Psoas muscle (tissue), 8 donors: ENCODE measurements at regions of chr12 and their contacts with region 1.

Region 1: DNA sequence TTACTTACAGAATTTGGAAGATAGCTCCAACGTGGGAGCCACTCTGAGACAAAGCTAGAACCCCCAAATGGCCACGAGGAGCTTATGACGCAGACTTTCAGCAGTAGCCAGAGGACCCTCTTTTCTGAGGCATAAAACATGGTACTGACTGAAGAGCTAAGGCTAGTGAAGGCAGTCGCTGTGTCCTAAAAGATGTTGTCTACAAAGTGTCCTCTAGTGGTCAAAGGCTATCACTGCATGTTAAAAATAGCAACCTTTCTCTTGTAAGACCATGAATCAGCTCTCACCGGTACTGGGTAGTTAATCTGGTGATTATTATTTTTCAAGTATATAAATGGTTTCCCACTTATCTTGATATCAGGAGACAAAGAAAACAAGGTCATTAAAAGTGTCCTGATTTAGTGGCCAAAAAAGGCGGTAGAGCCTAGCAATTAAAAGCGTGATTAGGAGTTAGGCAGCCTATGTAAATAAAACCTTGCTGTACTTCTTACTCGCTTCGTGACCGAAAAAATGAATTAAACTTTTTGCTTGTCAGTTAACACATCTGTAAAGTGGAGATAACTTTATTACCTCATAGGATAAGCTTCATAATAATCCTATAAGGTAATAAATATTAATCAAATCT is 47.0 kb upstream of the LGR5 start:
- DNase-seq: no peak
- ATAC-seq: peak; percentile 79 to 99 (median 90)
- H3K4me3 ChIP-seq: no peak overlapping the region
- H3K27ac ChIP-seq: no peak overlapping the region
- H3K4me1 ChIP-seq: no peaks in the 10 kb centered on the region
- H3K27me3 ChIP-seq: no peaks in the 10 kb centered on the region
- CTCF ChIP-seq: peak; percentile 76

Region 2: GRCh38 chr12:70733385-70733784 is 659.2 kb before region 1 on chr12:
- intact Hi-C with region 1: loop called in 1 of 2 experiments (anchors 10 kb)
- DNase-seq: no peak
- ATAC-seq: peak in 2 of 4 donors; percentile 72 to 85
- H3K4me3 ChIP-seq: no peak overlapping the region
- H3K27ac ChIP-seq: no peak overlapping the region
- H3K4me1 ChIP-seq: no peaks in the 10 kb centered on the region
- H3K27me3 ChIP-seq: no peaks in the 10 kb centered on the region
- CTCF ChIP-seq: peak; percentile 64

Region 3: DNA sequence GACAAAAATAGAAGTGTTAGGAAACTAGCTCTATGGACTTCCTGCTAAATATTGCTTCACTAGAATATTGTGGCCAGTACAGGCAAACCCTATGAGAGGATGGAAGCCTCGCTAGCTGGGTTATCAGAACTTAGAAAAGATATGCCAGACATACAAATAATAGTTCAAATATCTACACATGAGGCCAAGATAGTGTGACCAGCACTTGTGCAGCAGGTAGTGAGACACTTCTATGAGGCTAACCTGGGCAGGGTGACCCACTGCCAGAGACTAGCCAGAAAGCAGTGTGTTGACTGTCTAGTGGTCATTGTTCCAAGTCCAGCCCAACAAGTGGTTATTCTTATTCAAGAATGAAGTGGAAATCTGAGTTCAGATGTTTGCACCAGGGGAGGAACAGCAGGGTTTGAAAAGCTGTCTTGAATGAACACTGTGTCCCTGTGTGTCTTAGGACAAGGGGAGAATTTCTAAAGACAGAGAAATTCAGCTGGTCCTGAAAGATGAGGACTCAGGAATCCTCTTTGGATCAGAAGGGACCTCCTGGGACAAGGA is 251.2 kb before region 1 on chr12:
- intact Hi-C with region 1: loop called in 1 of 2 experiments (anchors 10 kb)
- DNase-seq: no peak
- ATAC-seq: peak; percentile 27 to 91 (median 74)
- H3K4me3 ChIP-seq: no peak overlapping the region
- H3K27ac ChIP-seq: peak overlapping the region; percentile 72
- H3K4me1 ChIP-seq: peaks cover 25% of the 10 kb centered on the region
- H3K27me3 ChIP-seq: no peaks in the 10 kb centered on the region
- CTCF ChIP-seq: no peak

Region 4: GRCh38 chr12:71216725-71217579 is 175.7 kb before region 1 on chr12:
- intact Hi-C with region 1: loop called (anchors 10 kb)
- DNase-seq: no peak
- ATAC-seq: peak in 2 of 4 donors; percentile 45 to 77
- H3K4me3 ChIP-seq: no peak overlapping the region
- H3K27ac ChIP-seq: no peak overlapping the region
- H3K4me1 ChIP-seq: no peaks in the 10 kb centered on the region
- H3K27me3 ChIP-seq: no peaks in the 10 kb centered on the region
- CTCF ChIP-seq: peak; percentile 52